HepG2 (cell line): ENCODE measurements at regions of chr2 and their contacts with region 1.

Region 1: DNA sequence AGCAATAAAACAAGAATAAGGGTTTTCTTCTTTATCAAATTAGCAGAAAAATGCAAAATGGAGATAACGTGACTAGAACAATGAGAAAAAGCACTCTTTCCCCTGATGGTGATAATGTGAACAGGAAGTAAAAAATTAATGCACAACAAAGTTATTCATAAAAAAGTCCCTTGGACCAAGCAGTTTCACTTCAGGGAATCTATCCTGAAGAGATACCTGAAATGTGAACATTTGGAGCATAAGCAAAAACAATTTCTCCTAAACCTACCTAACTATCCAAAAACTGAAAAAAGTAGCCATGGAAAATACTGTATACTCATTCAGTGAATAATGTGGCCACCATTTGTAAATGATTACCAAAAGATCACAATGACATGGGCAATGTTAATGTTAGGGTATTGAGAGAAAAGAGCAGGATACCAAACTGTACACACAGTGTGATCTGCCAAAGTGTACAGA is 48.7 kb downstream of the TRIP12 start:
- DNase-seq: no peak
- ATAC-seq: no peak
- H3K4me3 ChIP-seq: no peak overlapping the region
- H3K27ac ChIP-seq: no peak overlapping the region
- H3K4me1 ChIP-seq: peaks cover 16% of the 10 kb centered on the region
- H3K27me3 ChIP-seq: no peaks in the 10 kb centered on the region
- CTCF ChIP-seq: no peak
- EP300 ChIP-seq: no peak
- POLR2A ChIP-seq: no peak
- RAD21 ChIP-seq: no peak

Region 2: DNA sequence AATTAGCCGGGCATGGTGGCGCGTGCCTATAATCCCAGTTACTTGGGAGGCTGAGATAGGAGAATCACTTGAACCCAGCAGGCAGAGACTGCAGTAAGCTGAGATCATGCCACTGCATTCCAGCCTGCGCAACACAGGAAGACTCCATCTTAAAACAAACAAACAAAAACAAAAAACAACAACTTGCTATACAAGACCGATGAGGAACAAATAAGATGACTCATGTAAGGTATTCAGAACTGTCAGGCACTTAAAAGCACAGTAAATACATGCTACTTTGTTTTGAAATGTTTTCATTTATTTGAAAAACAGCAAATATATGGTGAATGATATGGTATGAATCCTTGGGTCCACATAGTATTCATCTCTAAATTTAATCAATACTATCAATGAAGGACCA is 18.0 kb before region 1 on chr2:
- CTCF ChIA-PET with region 1: no interaction called
- POLR2A ChIA-PET with region 1: no interaction called
- in situ Hi-C with region 1: no loop called
- intact Hi-C with region 1: loop called (anchors 2 kb)
- DNase-seq: no peak
- ATAC-seq: no peak
- H3K4me3 ChIP-seq: no peak overlapping the region
- H3K27ac ChIP-seq: no peak overlapping the region
- H3K4me1 ChIP-seq: no peaks in the 10 kb centered on the region
- H3K27me3 ChIP-seq: no peaks in the 10 kb centered on the region
- CTCF ChIP-seq: no peak
- EP300 ChIP-seq: no peak
- POLR2A ChIP-seq: no peak
- RAD21 ChIP-seq: no peak

Region 3: GRCh38 chr2:230153390-230153976 is 280.3 kb after region 1 on chr2:
- CTCF ChIA-PET with region 1: no interaction called
- POLR2A ChIA-PET with region 1: no interaction called
- in situ Hi-C with region 1: no loop called
- intact Hi-C with region 1: no loop called
- DNase-seq: no peak
- ATAC-seq: no peak
- H3K4me3 ChIP-seq: no peak overlapping the region
- H3K27ac ChIP-seq: no peak overlapping the region
- H3K4me1 ChIP-seq: no peaks in the 10 kb centered on the region
- H3K27me3 ChIP-seq: peaks cover 5 to 19% of the 10 kb centered on the region in 2 experiments; a peak in 4 of 5 replicates
- CTCF ChIP-seq: no peak
- EP300 ChIP-seq: no peak
- POLR2A ChIP-seq: no peak
- RAD21 ChIP-seq: no peak